Testis (tissue), 5 donors: ENCODE measurements at regions of chr22 and their contacts with region 1.

Region 1: GRCh38 chr22:40024201-40025061 is 29.7 kb downstream of the FAM83F start:
- DNase-seq: peak; percentile 84
- H3K4me3 ChIP-seq: no peak overlapping the region
- H3K27ac ChIP-seq: no peak overlapping the region
- H3K4me1 ChIP-seq: no peaks in the 10 kb centered on the region
- H3K27me3 ChIP-seq: no peaks in the 10 kb centered on the region
- CTCF ChIP-seq: peak; percentile 74 to 81 (median 77)
- POLR2A ChIP-seq: no peak

Region 2: GRCh38 chr22:39534591-39535356 is 489.7 kb before region 1 on chr22:
- intact Hi-C with region 1: loop called (anchors 5 kb)
- DNase-seq: peak; percentile 94
- H3K4me3 ChIP-seq: no peak overlapping the region
- H3K27ac ChIP-seq: no peak overlapping the region
- H3K4me1 ChIP-seq: peaks cover 13% of the 10 kb centered on the region
- H3K27me3 ChIP-seq: no peaks in the 10 kb centered on the region
- CTCF ChIP-seq: peak; percentile 91 to 95 (median 94)
- POLR2A ChIP-seq: no peak